Pancreas (tissue), 10 donors: ENCODE measurements at regions of chr1 and their contacts with region 1.

Region 1: GRCh38 chr1:150621497-150622302 is 7.7 kb downstream of the ENSA start:
- DNase-seq: peak in 2 of 6 donors; percentile 55 to 58
- ATAC-seq: peak in 3 of 4 donors; percentile 54 to 58 (median 57)
- H3K4me3 ChIP-seq: no peak overlapping the region
- H3K27ac ChIP-seq: peak overlapping the region in 2 of 4 donors; percentile 28 to 38
- H3K4me1 ChIP-seq: peaks cover 0 to 27% (median 0%) of the 10 kb centered on the region in 3 donors
- H3K27me3 ChIP-seq: no peaks in the 10 kb centered on the region
- CTCF ChIP-seq: peak; percentile 14 to 53 (median 32)

Region 2: DNA sequence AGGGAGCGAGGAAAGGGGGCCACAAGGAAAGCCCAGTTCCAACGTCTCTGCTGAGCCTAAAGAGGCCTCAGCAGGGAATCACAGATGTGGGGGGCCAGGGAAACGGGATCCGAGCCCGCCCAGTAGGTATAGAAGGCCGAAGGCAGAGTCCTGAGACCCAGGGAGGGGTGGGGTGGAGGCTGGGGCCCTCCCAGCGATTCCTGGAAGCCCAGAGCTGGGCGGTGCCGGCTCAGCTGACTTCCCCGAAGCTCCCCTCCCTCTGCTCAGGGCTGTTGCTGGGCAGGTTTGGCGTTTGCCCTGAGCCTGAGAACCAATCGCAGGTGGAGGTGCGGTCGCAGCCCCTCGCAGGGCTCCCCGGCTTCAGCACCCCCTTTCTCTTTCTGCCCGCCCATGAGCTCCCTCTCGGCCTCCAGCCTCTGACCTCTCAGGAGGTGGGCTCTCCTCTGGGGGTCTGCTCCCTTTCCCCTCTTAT is 59.7 kb before region 1 on chr1:
- intact Hi-C with region 1: loop called in 1 of 3 experiments (anchors 5 kb)
- DNase-seq: peak; percentile 93 to 97 (median 96)
- ATAC-seq: peak; percentile 76 to 87 (median 79)
- H3K4me3 ChIP-seq: peak overlapping the region; percentile 14 to 51 (median 30)
- H3K27ac ChIP-seq: peak overlapping the region; percentile 96 to 100 (median 99)
- H3K4me1 ChIP-seq: peaks cover 55 to 61% (median 59%) of the 10 kb centered on the region in 3 donors
- H3K27me3 ChIP-seq: no peaks in the 10 kb centered on the region
- CTCF ChIP-seq: no peak

Region 3: DNA sequence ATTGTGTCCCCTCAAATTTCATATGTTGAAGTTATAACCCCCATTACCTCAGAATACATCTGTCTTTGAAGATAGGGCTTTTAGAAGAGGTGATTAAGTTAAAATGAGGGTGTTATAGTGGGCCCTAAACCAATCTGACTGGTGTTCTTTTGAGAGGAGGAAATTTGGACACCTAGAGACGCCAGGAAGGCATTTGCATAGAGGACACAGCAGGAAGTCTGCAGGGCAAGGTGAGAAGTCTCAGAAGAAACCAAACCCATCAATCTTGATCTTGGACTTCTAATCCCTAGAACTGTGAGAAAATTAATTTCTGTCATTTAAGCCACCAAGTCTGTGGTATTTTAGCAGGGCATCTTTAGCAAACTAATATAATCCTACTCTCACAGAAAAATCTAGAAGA is 62.2 kb after region 1 on chr1:
- intact Hi-C with region 1: no loop called
- DNase-seq: no peak
- ATAC-seq: no peak
- H3K4me3 ChIP-seq: no peak overlapping the region
- H3K27ac ChIP-seq: no peak overlapping the region
- H3K4me1 ChIP-seq: peaks cover 0 to 2% (median 0%) of the 10 kb centered on the region in 3 donors
- H3K27me3 ChIP-seq: no peaks in the 10 kb centered on the region
- CTCF ChIP-seq: no peak